ENCODE measurements at regions of chr5 and their contacts with region 1.

Region 1: DNA sequence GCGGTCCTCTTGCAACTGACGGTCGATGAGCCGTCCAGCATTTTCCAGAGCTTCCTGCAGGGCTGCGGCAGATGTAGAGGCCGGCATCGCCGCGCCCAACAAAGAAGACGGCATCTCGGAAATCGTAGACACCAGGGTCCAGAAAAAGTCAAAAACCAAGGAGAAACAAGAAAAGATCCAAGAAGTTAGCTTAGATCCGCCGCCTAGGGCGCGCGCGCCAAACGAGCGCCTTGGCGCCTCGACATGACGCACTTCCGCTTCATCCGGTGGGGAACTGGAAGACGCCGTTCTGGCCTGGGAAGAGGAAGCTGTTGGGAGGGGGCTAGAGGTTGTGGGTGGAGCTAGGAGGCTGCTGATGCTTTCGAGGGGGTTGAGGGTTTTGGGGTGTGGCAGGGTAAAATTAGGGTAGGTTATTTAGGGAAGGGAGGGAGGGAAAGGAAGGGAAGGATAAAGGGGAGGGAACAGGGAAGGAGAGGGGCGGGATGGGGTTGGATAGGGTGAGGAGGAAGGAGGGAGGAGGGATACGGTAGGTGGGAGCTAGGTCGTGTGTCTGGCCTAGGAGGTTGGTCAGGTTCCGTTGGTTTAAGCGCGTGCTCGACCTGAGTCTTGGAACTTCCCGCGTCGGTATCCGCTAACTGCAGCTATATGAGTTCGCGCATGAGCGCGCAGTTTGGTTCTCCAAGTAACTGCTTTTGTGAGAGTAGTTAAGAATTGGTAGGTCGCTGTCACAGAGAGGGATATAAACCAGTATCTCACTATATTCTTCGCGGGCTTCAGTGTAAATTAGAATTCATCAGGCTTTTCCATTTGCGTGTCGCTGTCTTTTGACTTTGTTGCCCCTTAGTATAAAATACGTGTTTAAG is at the start of gene NUP155:
- DNase-seq: peak; percentile 90
- H3K4me3 ChIP-seq: peak within 1 kb of the TSS; percentile 79 to 83
- H3K27ac ChIP-seq: peak within 1 kb of the TSS; percentile 65 to 66
- H3K4me1 ChIP-seq: peaks cover 2 to 11% of the 10 kb centered on the region in 2 experiments; a peak in 3 of 4 replicates
- H3K27me3 ChIP-seq: no peaks in the 10 kb centered on the region
- CTCF ChIP-seq: no peak
- EP300 ChIP-seq: no peak
- RAD21 ChIP-seq: no peak
- polyA plus RNA-seq, gene NUP155: 6.7 and 8.4 TPM in 2 replicates

Region 2: DNA sequence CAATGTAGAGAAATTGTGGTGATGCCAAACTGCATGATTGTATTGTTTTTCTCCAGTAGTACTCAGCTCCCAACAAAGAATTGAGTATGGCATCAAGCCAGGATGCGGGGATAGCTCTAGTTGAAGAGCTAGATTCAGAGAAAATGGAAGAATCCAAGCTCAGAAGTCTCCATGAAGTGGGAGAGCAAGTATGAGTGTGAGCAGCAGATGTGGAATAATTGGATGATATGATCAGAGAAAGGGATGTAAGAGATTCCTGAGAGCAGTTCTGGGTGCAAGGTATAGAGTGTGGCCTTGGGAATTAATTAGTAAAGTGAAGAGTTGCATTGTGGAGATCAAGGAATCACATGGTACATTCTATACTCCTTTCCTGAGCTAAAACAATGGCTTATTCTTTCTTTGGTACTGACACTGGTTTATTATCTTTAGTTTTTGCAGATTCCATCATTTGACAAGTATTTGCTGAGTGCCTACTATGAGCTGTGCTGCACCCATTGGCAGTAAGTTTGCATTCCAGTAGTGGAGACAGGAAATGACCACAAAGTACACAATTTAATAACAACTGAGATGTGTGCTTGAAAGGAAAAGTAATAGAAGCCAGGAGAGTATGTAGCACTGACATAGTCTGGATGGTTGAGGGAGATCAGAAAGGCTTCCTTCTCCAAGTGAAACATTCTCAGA is 299.1 kb before region 1 on chr5:
- CTCF ChIA-PET with region 1: no interaction called
- POLR2A ChIA-PET with region 1: no interaction called
- DNase-seq: no peak
- H3K4me3 ChIP-seq: peak overlapping the region in 1 of 2 experiments; percentile 3; a peak in 1 of 4 replicates
- H3K27ac ChIP-seq: peak overlapping the region in 1 of 2 experiments; percentile 80; a peak in 2 of 4 replicates
- H3K4me1 ChIP-seq: peaks cover 0 to 7% of the 10 kb centered on the region in 2 experiments; a peak in 2 of 4 replicates
- H3K27me3 ChIP-seq: no peaks in the 10 kb centered on the region
- CTCF ChIP-seq: no peak
- EP300 ChIP-seq: peak in 1 of 2 experiments; percentile 50; a peak in 1 of 4 replicates
- RAD21 ChIP-seq: no peak

Region 3: GRCh38 chr5:38944282-38944681 is 1573.2 kb after region 1 on chr5:
- CTCF ChIA-PET with region 1: no interaction called
- POLR2A ChIA-PET with region 1: interaction called, 10 read pairs
- DNase-seq: no peak
- H3K4me3 ChIP-seq: no peak overlapping the region
- H3K27ac ChIP-seq: no peak overlapping the region
- H3K4me1 ChIP-seq: peaks cover 0 to 10% of the 10 kb centered on the region in 2 experiments; a peak in 1 of 4 replicates
- H3K27me3 ChIP-seq: no peaks in the 10 kb centered on the region
- CTCF ChIP-seq: no peak
- EP300 ChIP-seq: no peak
- RAD21 ChIP-seq: no peak

Measured in SK-N-SH (cell line).